Natural killer cell (primary cell): ENCODE measurements at regions of chr20 and their contacts with region 1.

Region 1: GRCh38 chr20:3795511-3796468 is at the start of gene CDC25B:
- DNase-seq: peak; percentile 84 to 91
- ATAC-seq: peak; percentile 85 to 93 (median 87)
- H3K4me3 ChIP-seq: peak within 1 kb of the TSS; percentile 87
- H3K4me3 Mint-ChIP-seq: peak within 1 kb of the TSS; percentile 97
- H3K27ac ChIP-seq: peak within 1 kb of the TSS; percentile 99
- H3K27ac Mint-ChIP-seq: peak within 1 kb of the TSS; percentile 96
- H3K4me1 ChIP-seq: peaks cover 57% of the 10 kb centered on the region
- H3K4me1 Mint-ChIP-seq: peaks cover 24 to 51% of the 10 kb centered on the region in 2 donors
- H3K27me3 ChIP-seq: no peaks in the 10 kb centered on the region
- H3K27me3 Mint-ChIP-seq: no peaks in the 10 kb centered on the region
- CTCF ChIP-seq: no peak
- total RNA-seq, gene CDC25B: 123 to 147 (median 143) TPM

Region 2: DNA sequence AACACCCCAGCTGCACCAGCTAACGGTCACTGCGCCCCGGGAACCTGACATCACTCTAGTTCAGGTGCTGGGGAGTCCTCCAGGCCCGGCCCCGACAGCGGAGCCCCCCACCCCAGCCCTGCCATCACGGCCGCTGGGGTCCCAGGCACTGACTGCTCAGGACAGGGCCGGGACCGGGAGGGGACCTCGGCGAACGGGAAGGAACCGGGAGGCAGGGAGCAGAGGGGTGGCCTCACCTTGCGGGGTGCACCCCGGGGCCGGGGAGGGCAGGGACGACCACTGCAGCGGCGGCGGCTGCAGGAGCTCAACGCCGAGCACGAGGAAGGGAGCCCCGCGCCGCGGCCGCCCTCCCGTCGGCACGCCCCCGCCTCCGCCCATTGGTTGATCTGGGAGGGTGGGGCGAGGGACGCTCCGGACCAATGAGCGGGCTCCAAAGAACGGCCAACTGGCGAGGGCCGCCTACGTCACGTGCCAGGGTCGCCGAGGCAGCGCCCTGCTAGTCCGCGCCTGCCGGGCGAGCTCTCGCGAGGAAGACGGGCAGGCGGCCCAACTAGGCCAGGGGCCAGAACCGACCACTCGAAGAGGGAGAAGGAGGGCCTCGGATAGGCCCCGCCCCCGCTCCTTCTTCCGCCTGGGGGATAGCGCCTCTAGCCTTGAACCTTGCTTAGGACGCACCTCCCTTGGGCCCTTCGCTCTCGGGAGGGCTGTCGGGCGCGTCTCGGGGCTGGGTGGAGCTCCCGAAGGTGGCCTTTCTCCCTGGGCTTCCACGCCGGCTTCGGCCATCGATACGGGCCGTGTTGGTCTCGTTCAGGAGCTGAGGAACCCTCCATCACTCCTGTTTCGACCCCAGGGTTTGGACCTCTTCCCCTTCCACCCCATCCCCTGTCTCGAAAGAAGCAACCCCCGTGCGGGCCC is 28.1 kb before region 1 on chr20 and contains the start of gene ADISSP:
- intact Hi-C with region 1: loop called (anchors 1 kb)
- DNase-seq: peak; percentile 96 to 98
- ATAC-seq: peak; percentile 87 to 96 (median 91)
- H3K4me3 ChIP-seq: peak within 1 kb of the TSS; percentile 91
- H3K4me3 Mint-ChIP-seq: peak within 1 kb of the TSS; percentile 88
- H3K27ac ChIP-seq: peak within 1 kb of the TSS; percentile 98
- H3K27ac Mint-ChIP-seq: peak within 1 kb of the TSS; percentile 83 to 94
- H3K4me1 ChIP-seq: peaks cover 45% of the 10 kb centered on the region
- H3K4me1 Mint-ChIP-seq: peaks cover 5 to 33% of the 10 kb centered on the region in 2 donors
- H3K27me3 ChIP-seq: no peaks in the 10 kb centered on the region
- H3K27me3 Mint-ChIP-seq: no peaks in the 10 kb centered on the region
- CTCF ChIP-seq: no peak
- total RNA-seq, gene ADISSP: 10.1 to 13.5 (median 12.3) TPM

Region 3: DNA sequence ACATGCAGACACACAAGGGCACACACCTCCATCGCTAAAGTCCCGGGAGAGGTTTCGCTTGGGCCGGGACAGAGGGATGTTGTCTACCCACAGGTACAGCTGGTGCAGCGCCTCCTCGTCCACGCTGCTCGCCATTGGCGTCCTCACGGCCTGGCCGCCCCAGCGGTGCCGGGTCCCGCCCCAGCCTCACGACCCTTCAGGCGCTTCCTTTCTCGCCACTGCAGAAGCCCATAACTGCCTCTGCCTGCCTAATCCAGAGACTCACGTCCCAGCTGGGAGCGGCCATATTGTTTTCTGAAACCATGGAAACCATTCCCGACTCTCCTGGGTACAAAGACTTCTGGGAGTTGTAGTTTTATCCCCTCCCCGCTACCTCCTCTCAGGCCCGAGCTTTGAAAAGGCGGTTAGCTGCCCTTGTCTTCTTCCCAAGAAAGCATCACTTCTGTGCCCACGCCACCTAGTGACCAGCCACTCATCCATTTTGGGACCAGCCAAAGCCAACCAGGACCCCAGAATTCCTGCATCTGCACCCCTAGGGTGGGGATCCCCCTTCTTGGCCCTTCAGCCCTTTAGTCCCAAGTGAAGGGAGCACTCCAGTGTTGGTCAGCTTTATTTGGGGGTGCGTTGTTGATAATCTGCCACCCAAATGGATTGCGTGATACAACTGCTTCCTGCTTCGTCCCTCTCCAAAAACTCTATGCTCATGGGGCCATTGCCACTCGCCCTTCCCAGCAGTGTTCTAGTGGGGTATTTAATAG is 14.5 kb before region 1 on chr20 and contains the start of gene SPEF1:
- intact Hi-C with region 1: no loop called
- DNase-seq: peak in 1 of 2 donors; percentile 80
- ATAC-seq: peak; percentile 36 to 56 (median 52)
- H3K4me3 ChIP-seq: no peak within 1 kb of the TSS
- H3K4me3 Mint-ChIP-seq: peak within 1 kb of the TSS; percentile 18
- H3K27ac ChIP-seq: no peak within 1 kb of the TSS
- H3K27ac Mint-ChIP-seq: peak within 1 kb of the TSS; percentile 64 to 82
- H3K4me1 ChIP-seq: peaks cover 48% of the 10 kb centered on the region
- H3K4me1 Mint-ChIP-seq: peaks cover 26 to 69% of the 10 kb centered on the region in 2 donors
- H3K27me3 ChIP-seq: peaks cover 15% of the 10 kb centered on the region
- H3K27me3 Mint-ChIP-seq: no peaks in the 10 kb centered on the region
- CTCF ChIP-seq: no peak
- total RNA-seq, gene SPEF1: 0.23 TPM in 1 of 3 donors, not detected in the others

Region 4: DNA sequence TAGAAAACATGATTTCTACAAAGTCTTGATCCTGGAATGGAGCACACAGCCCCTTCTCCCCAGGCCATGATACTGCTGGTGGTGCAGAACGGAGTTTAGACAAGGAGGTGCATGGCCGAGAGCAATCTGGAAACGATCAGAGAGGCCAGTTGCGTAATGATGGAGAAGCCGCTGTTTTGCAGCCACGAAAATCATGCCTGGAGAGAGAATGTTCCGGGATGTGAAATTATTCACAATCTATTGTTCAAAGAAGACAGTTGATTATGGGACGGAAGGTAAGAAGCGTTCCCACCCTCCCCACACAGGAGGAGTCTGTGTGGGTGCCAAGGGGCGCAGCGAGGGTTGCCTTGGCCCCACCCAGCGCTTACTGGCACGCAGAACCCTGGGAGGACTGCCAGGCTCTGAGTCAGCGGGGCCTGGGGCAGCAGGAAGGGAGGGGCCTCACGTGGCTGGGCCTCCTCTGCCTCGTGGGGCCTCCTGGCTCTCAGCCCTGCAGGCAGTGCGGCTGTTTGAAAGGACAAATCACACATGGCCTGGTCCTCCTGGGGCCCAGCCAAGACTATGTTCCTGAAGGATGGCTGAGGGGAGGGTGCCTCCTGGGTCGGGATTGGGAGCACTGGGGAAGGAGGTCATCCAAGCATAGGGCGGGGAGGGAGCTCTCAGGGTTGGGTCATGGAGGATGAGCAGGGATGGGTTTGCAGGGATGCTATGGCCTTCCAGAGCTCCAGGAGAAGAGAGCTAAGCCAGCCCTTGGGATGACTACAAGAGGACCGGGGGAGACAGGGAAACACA is 15.9 kb after region 1 on chr20:
- intact Hi-C with region 1: loop called (anchors 1 kb)
- DNase-seq: peak; percentile 79 to 97
- ATAC-seq: peak; percentile 81 to 89 (median 85)
- H3K4me3 ChIP-seq: peak overlapping the region; percentile 52
- H3K4me3 Mint-ChIP-seq: peak overlapping the region; percentile 94
- H3K27ac ChIP-seq: peak overlapping the region; percentile 94
- H3K27ac Mint-ChIP-seq: peak overlapping the region; percentile 95 to 99
- H3K4me1 ChIP-seq: peaks cover 89% of the 10 kb centered on the region
- H3K4me1 Mint-ChIP-seq: peaks cover 60 to 74% of the 10 kb centered on the region in 2 donors
- H3K27me3 ChIP-seq: no peaks in the 10 kb centered on the region
- H3K27me3 Mint-ChIP-seq: no peaks in the 10 kb centered on the region
- CTCF ChIP-seq: no peak

Region 5: DNA sequence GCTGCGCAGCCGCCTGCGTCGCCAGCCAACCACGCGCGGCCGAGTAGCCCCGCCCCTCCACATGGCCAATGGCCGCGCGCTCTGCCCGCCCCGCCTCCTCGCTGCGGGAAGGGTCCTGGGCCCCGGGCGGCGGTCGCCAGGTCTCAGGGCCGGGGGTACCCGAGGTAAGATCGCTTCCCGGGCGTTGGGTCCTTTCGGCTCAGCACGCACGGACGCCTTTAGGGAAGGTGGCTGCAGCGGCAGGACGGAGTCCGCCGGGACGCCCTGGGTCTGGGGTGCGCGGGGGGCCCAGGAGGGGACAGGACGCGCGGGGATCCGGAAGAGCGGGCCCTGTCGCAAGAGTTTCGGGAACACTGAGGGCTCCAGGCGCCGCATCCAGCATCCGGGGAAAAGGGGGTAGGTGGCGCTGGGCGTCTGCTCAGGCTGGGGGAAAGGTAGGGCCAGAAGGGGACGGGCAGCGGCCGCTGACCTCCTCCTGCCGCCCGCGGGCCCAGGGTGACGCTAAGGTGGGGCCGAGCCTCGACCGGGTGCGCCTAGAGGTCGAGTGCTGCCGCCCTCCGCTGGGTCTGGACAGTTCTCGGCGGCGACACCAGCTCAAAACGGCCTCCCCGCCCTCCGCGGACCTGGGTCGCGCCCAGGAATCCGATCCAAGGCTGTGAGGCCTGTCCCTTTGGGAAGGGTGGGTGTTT is 51.1 kb after region 1 on chr20 and contains the start of gene MAVS:
- intact Hi-C with region 1: loop called (anchors 5 kb)
- DNase-seq: peak; percentile 87 to 92
- ATAC-seq: peak; percentile 98
- H3K4me3 ChIP-seq: peak within 1 kb of the TSS; percentile 100
- H3K4me3 Mint-ChIP-seq: peak within 1 kb of the TSS; percentile 89
- H3K27ac ChIP-seq: peak within 1 kb of the TSS; percentile 85
- H3K27ac Mint-ChIP-seq: peak within 1 kb of the TSS; percentile 81 to 89
- H3K4me1 ChIP-seq: peaks cover 22% of the 10 kb centered on the region
- H3K4me1 Mint-ChIP-seq: peaks cover 16 to 31% of the 10 kb centered on the region in 2 donors
- H3K27me3 ChIP-seq: no peaks in the 10 kb centered on the region
- H3K27me3 Mint-ChIP-seq: no peaks in the 10 kb centered on the region
- CTCF ChIP-seq: no peak
- total RNA-seq, gene MAVS: 23.1 to 30.8 (median 26.4) TPM

Region 6: GRCh38 chr20:3935295-3935955 is 139.6 kb after region 1 on chr20:
- intact Hi-C with region 1: no loop called
- DNase-seq: no peak
- ATAC-seq: no peak
- H3K4me3 ChIP-seq: no peak overlapping the region
- H3K4me3 Mint-ChIP-seq: no peak overlapping the region
- H3K27ac ChIP-seq: no peak overlapping the region
- H3K27ac Mint-ChIP-seq: no peak overlapping the region
- H3K4me1 ChIP-seq: peaks cover 9% of the 10 kb centered on the region
- H3K4me1 Mint-ChIP-seq: peaks cover 11 to 14% of the 10 kb centered on the region in 2 donors
- H3K27me3 ChIP-seq: no peaks in the 10 kb centered on the region
- H3K27me3 Mint-ChIP-seq: no peaks in the 10 kb centered on the region
- CTCF ChIP-seq: no peak